ENCODE measurements at regions of chr15 and their contacts with region 1.

Region 1: DNA sequence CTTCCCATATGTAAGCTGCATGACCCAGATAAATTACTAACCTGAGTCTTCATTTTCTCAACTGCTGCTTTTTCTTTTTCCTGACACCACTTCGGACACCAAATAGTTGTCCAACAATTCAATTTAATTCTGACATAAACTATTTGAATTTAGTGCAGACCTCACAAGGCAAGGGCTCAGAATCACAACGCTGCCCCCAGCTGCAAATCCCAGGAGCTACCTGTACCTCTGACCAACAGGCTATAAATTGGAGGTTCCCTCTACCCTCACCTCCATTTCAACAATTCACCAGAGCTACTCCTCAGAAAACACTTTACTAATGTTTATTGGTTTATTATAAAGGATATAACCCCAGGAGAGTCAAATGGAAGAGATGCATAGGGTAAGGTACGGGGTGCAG is 737.6 kb downstream of the NTRK3 start:
- DNase-seq: no peak
- H3K4me3 ChIP-seq: no peak overlapping the region
- CTCF ChIP-seq: no peak
- POLR2A ChIP-seq: no peak

Region 2: DNA sequence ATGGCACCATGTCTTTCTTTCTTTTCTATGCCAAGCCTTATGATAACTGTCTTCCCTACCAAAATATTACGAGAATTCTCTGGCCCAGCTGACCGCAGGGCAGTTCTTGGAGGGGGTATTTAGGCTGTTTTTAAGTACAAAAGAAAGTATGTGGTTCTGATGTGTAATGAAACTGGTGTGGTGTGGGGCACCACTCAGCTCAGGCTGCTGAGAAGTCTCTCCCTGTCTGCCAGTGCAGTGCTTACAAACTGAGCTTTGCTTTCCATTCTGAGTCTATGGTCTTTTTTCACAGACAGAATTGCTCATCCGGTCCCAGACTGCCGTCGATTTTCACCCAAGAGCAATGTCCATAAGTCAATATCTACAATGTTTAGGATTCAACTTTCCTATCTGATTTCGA is 110.1 kb before region 1 on chr15:
- intact Hi-C with region 1: loop called (anchors 5 kb)
- DNase-seq: no peak
- H3K4me3 ChIP-seq: no peak overlapping the region
- CTCF ChIP-seq: no peak
- POLR2A ChIP-seq: no peak

Measured in lower leg skin (tissue), 4 donors.